CD4-positive, alpha-beta T cell (primary cell): ENCODE measurements at regions of chr7 and their contacts with region 1.

Region 1: DNA sequence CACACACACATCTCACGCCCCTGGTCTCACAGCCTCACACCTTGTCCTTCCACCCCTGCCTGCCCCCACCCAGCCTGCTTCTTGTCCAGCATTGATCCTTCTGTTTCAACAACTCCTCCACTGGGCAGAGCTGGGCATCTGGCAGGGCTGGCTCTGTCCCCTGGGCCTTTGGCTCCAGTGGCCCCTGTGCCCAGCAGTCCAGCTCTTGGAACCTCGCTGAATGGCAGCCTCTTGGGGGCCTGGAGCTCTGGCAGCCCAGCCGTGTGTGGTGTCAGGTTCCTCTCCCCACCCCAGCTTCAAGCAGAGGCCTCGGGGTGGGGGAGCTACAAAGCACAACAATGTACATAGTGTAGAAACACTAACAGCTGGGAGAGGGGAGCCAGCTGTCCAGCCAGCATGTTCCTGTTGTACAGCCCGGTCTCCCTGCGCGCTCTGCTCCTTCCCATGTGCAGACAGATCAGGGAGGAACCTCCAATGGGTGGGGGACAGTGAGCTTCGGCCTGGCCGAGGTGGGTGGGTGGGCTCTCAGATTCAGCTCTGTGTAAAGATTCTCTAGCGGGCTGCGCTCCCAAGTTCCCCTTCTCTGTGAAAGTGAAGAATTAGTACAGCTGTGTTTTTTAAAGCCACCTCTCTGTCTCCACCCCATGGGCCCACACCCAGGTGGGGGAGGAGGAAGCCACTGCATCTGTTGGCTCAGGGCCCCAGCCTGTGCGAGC is 19.4 kb downstream of the ZMIZ2 start:
- DNase-seq: peak in 10 of 14 experiments; percentile 19 to 68 (median 40)
- ATAC-seq: peak; percentile 88
- H3K4me3 ChIP-seq: no peak overlapping the region
- H3K4me3 Mint-ChIP-seq: peak overlapping the region; percentile 8
- H3K27ac ChIP-seq: peak overlapping the region; percentile 14 to 48
- H3K27ac Mint-ChIP-seq: peak overlapping the region; percentile 83
- H3K4me1 ChIP-seq: peaks cover 40% of the 10 kb centered on the region
- H3K4me1 Mint-ChIP-seq: peaks cover 40% of the 10 kb centered on the region
- H3K27me3 ChIP-seq: no peaks in the 10 kb centered on the region
- H3K27me3 Mint-ChIP-seq: no peaks in the 10 kb centered on the region
- CTCF ChIP-seq: no peak

Region 2: DNA sequence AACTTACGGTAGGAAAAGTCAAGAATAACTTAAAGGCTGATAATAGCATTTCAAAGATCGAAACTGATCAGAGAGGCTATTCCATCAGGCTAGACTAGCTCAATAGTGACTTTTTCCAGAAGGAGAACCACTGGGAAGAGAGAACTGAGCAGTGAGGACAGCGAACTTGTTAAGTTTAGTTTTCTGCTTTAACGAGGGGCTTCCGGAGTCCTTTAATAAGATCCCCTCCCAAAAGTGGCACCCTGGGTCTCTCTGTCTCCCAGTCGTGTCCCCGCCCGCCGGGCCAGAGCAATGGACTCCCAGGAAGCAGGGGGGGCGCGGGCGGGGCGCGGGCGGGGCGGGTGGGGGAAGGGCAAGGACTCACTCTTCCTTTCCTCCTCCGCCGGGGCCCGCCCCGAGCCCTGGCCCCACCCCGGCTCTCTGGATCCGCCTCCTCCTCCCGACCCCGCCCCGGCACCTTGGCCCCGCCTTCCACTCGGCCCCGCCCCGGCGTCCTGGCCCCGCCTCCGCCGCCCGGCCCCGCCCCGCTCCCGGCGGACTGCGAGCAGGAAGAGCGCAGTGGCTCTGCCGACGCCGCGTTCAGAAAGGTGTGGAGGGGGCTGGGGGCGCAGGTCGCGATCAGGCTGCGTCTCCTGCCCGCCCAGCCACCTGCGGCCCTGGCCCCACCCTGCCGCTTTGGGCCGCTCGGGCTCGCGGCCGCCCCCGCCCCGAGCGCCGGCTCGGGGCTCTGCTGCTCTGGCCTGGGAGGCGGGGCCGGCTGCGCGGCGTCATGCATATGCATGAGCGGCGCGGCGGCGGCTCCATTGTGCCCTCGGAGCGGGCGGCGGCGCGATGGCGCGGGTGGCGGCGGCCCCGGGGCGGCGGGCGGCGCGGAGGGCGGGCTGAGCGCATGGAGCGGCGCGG is 19.8 kb before region 1 on chr7 and contains the start of gene ZMIZ2:
- CTCF ChIA-PET with region 1: interaction called, 3 read pairs
- POLR2A ChIA-PET with region 1: interaction called, 16 read pairs
- intact Hi-C with region 1: no loop called
- DNase-seq: peak; percentile 85 to 97 (median 92)
- ATAC-seq: peak; percentile 85
- H3K4me3 ChIP-seq: peak within 1 kb of the TSS; percentile 87
- H3K4me3 Mint-ChIP-seq: peak within 1 kb of the TSS; percentile 84
- H3K27ac ChIP-seq: peak within 1 kb of the TSS; percentile 70 to 75
- H3K27ac Mint-ChIP-seq: peak within 1 kb of the TSS; percentile 86
- H3K4me1 ChIP-seq: peaks cover 37% of the 10 kb centered on the region
- H3K4me1 Mint-ChIP-seq: peaks cover 43% of the 10 kb centered on the region
- H3K27me3 ChIP-seq: no peaks in the 10 kb centered on the region
- H3K27me3 Mint-ChIP-seq: no peaks in the 10 kb centered on the region
- CTCF ChIP-seq: no peak
- total RNA-seq, gene ZMIZ2: 81.5 to 82.0 TPM

Region 3: DNA sequence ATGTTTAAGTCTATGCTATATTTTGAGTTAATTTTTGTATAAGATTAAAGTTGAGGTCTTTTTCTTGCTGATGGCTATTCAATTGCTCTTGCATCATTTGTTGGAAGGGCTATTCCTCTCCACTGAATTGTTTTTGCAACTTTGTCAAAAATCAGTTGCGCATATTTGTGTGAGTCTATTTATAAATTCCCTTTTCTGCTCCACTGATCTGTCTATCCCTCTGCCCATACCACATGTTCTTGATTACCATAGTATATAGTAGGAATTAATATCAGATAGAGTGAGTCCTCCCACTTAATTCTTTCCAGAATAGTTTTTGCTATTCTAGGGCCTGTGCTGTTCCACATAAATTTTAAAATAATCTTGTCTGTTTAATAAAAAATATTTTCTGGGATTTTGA is 653.7 kb after region 1 on chr7:
- CTCF ChIA-PET with region 1: no interaction called
- POLR2A ChIA-PET with region 1: no interaction called
- intact Hi-C with region 1: no loop called
- DNase-seq: no peak
- ATAC-seq: no peak
- H3K4me3 ChIP-seq: no peak overlapping the region
- H3K4me3 Mint-ChIP-seq: no peak overlapping the region
- H3K27ac ChIP-seq: no peak overlapping the region
- H3K27ac Mint-ChIP-seq: no peak overlapping the region
- H3K4me1 ChIP-seq: no peaks in the 10 kb centered on the region
- H3K4me1 Mint-ChIP-seq: no peaks in the 10 kb centered on the region
- H3K27me3 ChIP-seq: peaks cover 2 to 11% of the 10 kb centered on the region in 2 experiments
- H3K27me3 Mint-ChIP-seq: peaks cover 38% of the 10 kb centered on the region
- CTCF ChIP-seq: no peak